Activated CD4-positive, alpha-beta T cell treated with anti-CD3 and anti-CD28 coated beads for 36 hours (primary cell): ENCODE measurements at regions of chr1 and their contacts with region 1.

Region 1: GRCh38 chr1:78340006-78340405 is 150.8 kb upstream of the PTGFR start:
- DNase-seq: no peak
- ATAC-seq: peak; percentile 57
- H3K4me3 Mint-ChIP-seq: no peak overlapping the region
- H3K27ac Mint-ChIP-seq: no peak overlapping the region
- H3K4me1 Mint-ChIP-seq: no peaks in the 10 kb centered on the region
- H3K27me3 Mint-ChIP-seq: peaks cover 5% of the 10 kb centered on the region

Region 2: DNA sequence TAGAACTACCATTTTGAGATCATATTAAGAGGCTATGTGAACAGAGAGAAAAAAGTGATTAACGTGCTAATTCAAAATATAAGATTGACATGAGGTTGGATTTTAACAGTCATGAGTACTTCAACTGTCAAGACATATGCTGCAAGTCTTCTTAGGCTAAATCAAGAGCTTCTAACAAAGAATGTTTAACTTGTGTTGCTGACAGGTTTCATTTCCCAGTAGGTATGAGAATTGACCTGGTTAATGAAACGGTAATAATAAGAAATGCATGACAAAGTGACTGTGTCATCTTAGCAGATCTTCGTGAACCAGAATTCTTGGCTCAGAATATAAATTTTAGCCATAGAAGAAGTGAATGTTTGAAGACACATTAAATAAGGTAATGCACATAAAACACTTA is 18.1 kb after region 1 on chr1:
- CTCF ChIA-PET with region 1: no interaction called
- POLR2A ChIA-PET with region 1: no interaction called
- intact Hi-C with region 1: loop called in 1 of 2 experiments (anchors 2 kb)
- DNase-seq: no peak
- ATAC-seq: no peak
- H3K4me3 Mint-ChIP-seq: no peak overlapping the region
- H3K27ac Mint-ChIP-seq: no peak overlapping the region
- H3K4me1 Mint-ChIP-seq: no peaks in the 10 kb centered on the region
- H3K27me3 Mint-ChIP-seq: no peaks in the 10 kb centered on the region